HepG2 (cell line): ENCODE measurements at regions of chr15 and their contacts with region 1.

Region 1: DNA sequence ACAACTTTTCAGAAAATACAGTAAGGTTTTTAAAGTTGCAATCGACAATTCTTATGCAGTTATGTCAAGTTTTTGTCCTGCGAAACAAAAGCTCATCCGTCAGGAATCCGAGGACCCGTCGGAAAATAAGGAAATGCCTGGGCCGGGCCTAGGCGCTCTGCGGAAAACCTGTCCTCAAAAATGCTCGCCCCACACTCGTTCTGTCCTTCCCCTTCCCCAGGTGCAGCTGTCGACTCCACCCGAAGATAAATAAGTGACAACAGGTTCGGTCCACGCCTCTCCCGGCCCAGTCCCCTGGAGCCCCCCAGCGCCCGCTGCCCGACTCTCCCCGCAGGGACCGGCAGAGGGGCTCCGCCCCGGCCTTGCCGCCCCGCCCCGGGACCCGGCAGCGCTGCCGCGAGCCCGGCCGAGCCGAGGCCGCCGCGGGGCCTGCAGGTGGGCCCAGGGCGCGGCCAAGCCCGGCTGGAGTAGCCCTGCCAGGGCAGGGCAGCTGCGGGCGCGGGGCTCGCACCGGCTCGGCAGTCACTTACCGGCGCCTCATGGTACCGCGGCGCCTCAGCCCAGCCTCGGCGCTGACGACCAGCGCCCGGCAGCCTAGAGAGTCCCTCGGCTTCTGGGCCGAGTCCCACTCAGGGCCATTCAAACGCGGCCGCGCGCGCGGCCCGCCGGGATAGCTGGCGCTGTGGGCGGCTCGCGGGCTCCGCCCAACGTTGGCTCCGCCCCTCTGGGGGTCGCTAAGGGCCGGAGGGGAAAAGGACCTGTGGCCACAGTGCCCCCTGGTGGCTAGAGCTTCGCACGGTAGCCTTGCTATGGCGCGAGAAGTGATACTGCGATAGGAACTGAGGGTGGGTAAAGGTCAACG is at the start of gene KATNBL1:
- DNase-seq: peak; percentile 88
- ATAC-seq: peak; percentile 95
- H3K4me3 ChIP-seq: peak within 1 kb of the TSS; percentile 79 to 89 (median 83)
- H3K27ac ChIP-seq: peak within 1 kb of the TSS; percentile 91
- H3K4me1 ChIP-seq: peaks cover 24% of the 10 kb centered on the region
- H3K27me3 ChIP-seq: no peaks in the 10 kb centered on the region; a peak in 1 of 5 replicates
- CTCF ChIP-seq: peak; percentile 97
- EP300 ChIP-seq: no peak
- POLR2A ChIP-seq: peak; percentile 87 to 90
- RAD21 ChIP-seq: peak; percentile 91
- total RNA-seq, gene KATNBL1: 42.8 and 43.9 TPM in 2 replicates

Region 2: GRCh38 chr15:34023907-34024306 is 185.7 kb before region 1 on chr15:
- CTCF ChIA-PET with region 1: no interaction called
- POLR2A ChIA-PET with region 1: no interaction called
- in situ Hi-C with region 1: no loop called
- intact Hi-C with region 1: no loop called
- DNase-seq: no peak
- ATAC-seq: no peak
- H3K4me3 ChIP-seq: no peak overlapping the region
- H3K27ac ChIP-seq: no peak overlapping the region
- H3K4me1 ChIP-seq: peaks cover 12% of the 10 kb centered on the region
- H3K27me3 ChIP-seq: no peaks in the 10 kb centered on the region
- CTCF ChIP-seq: no peak
- EP300 ChIP-seq: no peak
- POLR2A ChIP-seq: no peak
- RAD21 ChIP-seq: no peak

Region 3: GRCh38 chr15:34101366-34102175 is 108.1 kb before region 1 on chr15 and contains the starts of genes EMC7 and PGBD4:
- CTCF ChIA-PET with region 1: no interaction called
- POLR2A ChIA-PET with region 1: interaction called, 16 read pairs
- in situ Hi-C with region 1: no loop called
- intact Hi-C with region 1: no loop called
- DNase-seq: peak; percentile 98
- ATAC-seq: peak; percentile 99
- H3K4me3 ChIP-seq: peak within 1 kb of the TSS; percentile 84 to 95 (median 92)
- H3K27ac ChIP-seq: peak within 1 kb of the TSS; percentile 83
- H3K4me1 ChIP-seq: peaks cover 27% of the 10 kb centered on the region
- H3K27me3 ChIP-seq: peaks cover 0 to 3% of the 10 kb centered on the region in 2 experiments; a peak in 1 of 5 replicates
- CTCF ChIP-seq: peak; percentile 6; the same call in 1 of the 2 replicates
- EP300 ChIP-seq: peak in 1 of 2 experiments; percentile 5; a peak in 1 of 4 replicates
- POLR2A ChIP-seq: peak; percentile 86 to 93
- RAD21 ChIP-seq: no peak
- total RNA-seq, gene EMC7: 29.3 and 46.8 TPM in 2 replicates
- total RNA-seq, gene PGBD4: 1.3 and 1.4 TPM in 2 replicates

Region 4: GRCh38 chr15:34109797-34110663 is 99.6 kb before region 1 on chr15:
- CTCF ChIA-PET with region 1: interaction called, 39 read pairs
- POLR2A ChIA-PET with region 1: interaction called, 17 read pairs
- in situ Hi-C with region 1: loop called (anchors 5 kb)
- intact Hi-C with region 1: loop called (anchors 1 kb)
- DNase-seq: peak; percentile 45
- ATAC-seq: peak; percentile 78
- H3K4me3 ChIP-seq: no peak overlapping the region
- H3K27ac ChIP-seq: no peak overlapping the region
- H3K4me1 ChIP-seq: peaks cover 14% of the 10 kb centered on the region
- H3K27me3 ChIP-seq: no peaks in the 10 kb centered on the region
- CTCF ChIP-seq: peak; percentile 68
- EP300 ChIP-seq: no peak
- POLR2A ChIP-seq: no peak
- RAD21 ChIP-seq: no peak

Region 5: DNA sequence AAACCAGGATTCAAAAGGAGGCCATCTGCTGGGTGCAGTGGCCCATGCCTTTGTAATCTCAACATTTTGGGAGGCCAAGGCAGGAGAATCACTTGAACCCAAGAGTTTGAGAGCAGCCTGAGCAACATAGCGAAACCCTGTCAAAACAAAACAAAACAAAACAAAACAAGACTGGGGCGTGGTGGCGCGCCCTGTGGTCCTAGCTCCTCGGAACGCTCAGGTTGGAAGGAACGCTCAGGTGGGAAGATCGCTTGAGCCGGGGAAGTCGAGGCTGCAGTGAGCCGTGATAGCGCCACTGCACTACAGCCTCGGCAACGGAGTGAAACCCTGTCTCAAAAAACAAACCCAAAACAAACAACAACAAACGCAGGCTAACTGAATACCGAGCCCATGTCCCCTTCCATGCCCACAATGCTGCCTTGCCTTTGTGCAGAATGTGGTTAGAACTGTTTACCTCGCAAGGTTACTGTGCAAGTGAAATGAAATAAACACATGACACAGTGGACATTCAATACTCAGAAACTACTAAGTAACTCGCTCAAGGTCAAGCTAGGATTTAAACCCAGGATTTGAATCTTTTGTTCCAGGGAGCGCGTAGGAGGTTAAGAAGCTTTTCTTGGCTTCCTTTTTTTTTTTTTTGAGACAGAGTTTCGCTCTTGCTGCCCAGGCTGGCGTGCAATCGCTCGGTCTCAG is 14.4 kb after region 1 on chr15:
- CTCF ChIA-PET with region 1: no interaction called
- POLR2A ChIA-PET with region 1: interaction called, 9 read pairs
- in situ Hi-C with region 1: no loop called
- intact Hi-C with region 1: loop called (anchors 2 kb)
- DNase-seq: no peak
- ATAC-seq: peak; percentile 45
- H3K4me3 ChIP-seq: peak overlapping the region; percentile 93 to 98 (median 96)
- H3K27ac ChIP-seq: peak overlapping the region; percentile 89
- H3K4me1 ChIP-seq: peaks cover 16% of the 10 kb centered on the region; the same call in 1 of the 2 replicates
- H3K27me3 ChIP-seq: no peaks in the 10 kb centered on the region; a peak in 1 of 5 replicates
- CTCF ChIP-seq: 0 out of 2 replicates have a peak, but pooled peaks have one; percentile 31
- EP300 ChIP-seq: no peak
- POLR2A ChIP-seq: no peak
- RAD21 ChIP-seq: no peak